Naive thymus-derived CD4-positive, alpha-beta T cell (primary cell): ENCODE measurements at regions of chr1 and their contacts with region 1.

Region 1: GRCh38 chr1:89589515-89589914 is 43.4 kb upstream of the LRRC8C start:
- DNase-seq: no peak
- ATAC-seq: no peak
- H3K4me3 ChIP-seq: no peak overlapping the region
- H3K4me3 Mint-ChIP-seq: no peak overlapping the region
- H3K27ac ChIP-seq: no peak overlapping the region
- H3K27ac Mint-ChIP-seq: peak overlapping the region in 6 of 9 donors; percentile 1 to 57 (median 32)
- H3K4me1 ChIP-seq: peaks cover 0 to 1% of the 10 kb centered on the region in 2 donors
- H3K4me1 Mint-ChIP-seq: peaks cover 26 to 77% (median 70%) of the 10 kb centered on the region in 7 donors
- H3K27me3 ChIP-seq: no peaks in the 10 kb centered on the region
- H3K27me3 Mint-ChIP-seq: no peaks in the 10 kb centered on the region

Region 2: DNA sequence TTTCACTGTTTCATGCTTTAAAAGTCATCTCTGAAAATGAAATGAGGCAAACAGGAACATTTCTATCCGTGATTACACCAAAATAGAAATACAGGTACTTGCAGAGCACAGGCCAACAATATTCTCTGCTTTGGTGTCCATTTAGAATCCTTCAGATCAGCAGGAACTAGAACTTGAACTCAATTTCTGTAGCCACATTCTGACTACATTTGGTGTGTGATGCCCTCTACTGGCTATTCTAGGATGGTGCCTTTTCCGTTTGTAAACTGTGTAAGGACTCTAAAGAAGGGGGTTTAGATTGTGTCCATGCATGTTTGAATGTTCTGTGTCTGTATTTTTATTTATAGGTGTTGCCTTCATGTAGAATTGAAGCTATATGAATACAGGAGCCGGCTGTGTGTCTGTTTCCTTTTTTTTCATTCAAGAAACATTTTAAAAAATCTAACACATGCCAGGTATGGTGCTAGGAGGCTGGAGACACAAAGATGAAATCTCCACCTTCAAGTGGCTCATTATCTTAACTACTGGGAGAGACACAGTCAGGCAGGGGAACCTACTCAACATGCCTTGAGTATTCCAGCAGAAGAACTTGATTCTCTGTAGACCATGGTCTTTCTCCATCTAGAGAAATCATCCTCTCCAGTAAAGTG is 397.8 kb after region 1 on chr1:
- CTCF ChIA-PET with region 1: interaction called, 4 read pairs
- POLR2A ChIA-PET with region 1: no interaction called
- intact Hi-C with region 1: loop called in 1 of 2 experiments (anchors 10 kb)
- DNase-seq: peak in 8 of 9 donors; percentile 48 to 76 (median 70)
- ATAC-seq: peak; percentile 97
- H3K4me3 ChIP-seq: no peak overlapping the region
- H3K4me3 Mint-ChIP-seq: no peak overlapping the region
- H3K27ac ChIP-seq: no peak overlapping the region
- H3K27ac Mint-ChIP-seq: no peak overlapping the region
- H3K4me1 ChIP-seq: no peaks in the 10 kb centered on the region
- H3K4me1 Mint-ChIP-seq: no peaks in the 10 kb centered on the region
- H3K27me3 ChIP-seq: no peaks in the 10 kb centered on the region
- H3K27me3 Mint-ChIP-seq: peaks cover 0 to 13% (median 4%) of the 10 kb centered on the region in 5 donors